ENCODE measurements at regions of chr3 and their contacts with region 1.

Region 1: GRCh38 chr3:44761424-44762169 is at the starts of genes KIAA1143 and KIF15:
- H3K4me3 Mint-ChIP-seq: peak within 1 kb of the TSS; percentile 84
- H3K27ac Mint-ChIP-seq: peak within 1 kb of the TSS; percentile 91
- H3K4me1 Mint-ChIP-seq: peaks cover 11% of the 10 kb centered on the region
- H3K27me3 Mint-ChIP-seq: no peaks in the 10 kb centered on the region

Region 2: GRCh38 chr3:44477312-44478030 is 284.1 kb before region 1 on chr3 and contains the start of gene ZNF445:
- intact Hi-C with region 1: no loop called
- H3K4me3 Mint-ChIP-seq: peak within 1 kb of the TSS; percentile 81
- H3K27ac Mint-ChIP-seq: peak within 1 kb of the TSS; percentile 66
- H3K4me1 Mint-ChIP-seq: peaks cover 11% of the 10 kb centered on the region
- H3K27me3 Mint-ChIP-seq: no peaks in the 10 kb centered on the region

Region 3: DNA sequence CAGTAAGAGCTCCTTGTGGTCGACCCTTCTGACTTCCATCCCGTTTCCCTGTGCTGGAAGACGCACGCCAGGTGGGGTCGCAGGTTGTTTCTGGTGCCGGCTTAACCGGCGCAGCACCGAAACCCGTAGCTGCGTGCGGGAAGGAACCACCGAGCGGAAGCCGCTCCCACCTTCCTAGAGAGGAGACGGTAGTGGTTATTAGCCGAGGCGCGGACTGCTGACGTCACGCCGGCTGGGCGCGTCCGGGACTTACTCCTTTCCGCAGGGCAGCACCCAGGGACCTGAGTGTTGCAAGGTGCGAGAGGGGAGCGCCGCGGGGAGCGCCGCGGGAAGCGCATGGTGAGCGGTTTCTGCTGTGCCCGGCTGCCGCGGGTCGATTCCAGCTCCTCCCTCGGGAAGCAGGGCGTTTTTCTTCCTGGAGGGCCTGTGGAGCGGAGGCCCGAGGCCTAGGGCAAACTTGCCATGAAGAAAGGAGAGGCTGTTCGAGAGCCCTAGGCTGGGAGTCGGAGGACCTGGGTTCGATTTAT is 32.1 kb before region 1 on chr3 and contains the start of gene ZNF501:
- intact Hi-C with region 1: loop called (anchors 1 kb)
- H3K4me3 Mint-ChIP-seq: peak within 1 kb of the TSS; percentile 98
- H3K27ac Mint-ChIP-seq: peak within 1 kb of the TSS; percentile 91
- H3K4me1 Mint-ChIP-seq: peaks cover 16% of the 10 kb centered on the region
- H3K27me3 Mint-ChIP-seq: no peaks in the 10 kb centered on the region

Region 4: DNA sequence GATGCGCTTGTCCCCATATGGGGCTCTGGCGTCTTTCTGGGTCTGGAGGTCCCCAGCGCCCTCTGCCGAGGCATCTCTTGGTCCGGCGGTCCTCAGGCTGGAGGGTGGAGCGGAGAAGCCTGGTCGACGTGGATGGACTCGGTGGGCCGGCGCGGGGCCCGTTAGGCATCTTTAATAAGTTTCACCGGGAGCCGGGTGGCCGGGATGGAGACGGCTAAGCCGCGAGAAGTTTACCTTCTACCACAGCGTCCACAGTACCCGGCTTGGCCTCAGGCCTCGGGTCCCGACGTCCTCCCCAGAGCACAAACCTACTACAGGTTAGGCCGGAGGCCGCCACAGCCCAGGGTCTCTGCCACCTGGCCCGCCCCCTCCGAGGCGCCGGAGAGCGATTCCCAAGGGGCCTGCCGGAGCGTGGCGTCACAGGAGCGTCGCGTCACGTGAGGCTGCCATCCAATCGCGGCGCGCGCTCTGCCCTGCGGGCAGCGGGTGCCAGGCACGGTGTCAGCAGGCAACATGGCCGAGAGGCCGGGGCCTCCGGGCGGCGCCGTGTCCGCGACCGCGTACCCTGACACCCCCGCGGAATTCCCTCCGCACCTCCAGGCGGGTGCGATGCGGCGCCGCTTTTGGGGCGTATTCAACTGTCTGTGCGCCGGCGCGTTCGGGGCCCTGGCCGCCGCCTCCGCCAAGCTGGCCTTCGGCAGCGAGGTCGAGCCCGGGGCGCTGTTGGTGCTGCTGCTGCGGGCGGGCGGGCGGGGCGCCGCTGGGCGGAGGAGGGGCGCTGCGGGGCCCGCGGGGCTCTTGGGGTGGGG is 100.0 kb after region 1 on chr3 and contains the start of gene TMEM42:
- intact Hi-C with region 1: loop called (anchors 2 kb)
- H3K4me3 Mint-ChIP-seq: peak within 1 kb of the TSS; percentile 83
- H3K27ac Mint-ChIP-seq: peak within 1 kb of the TSS; percentile 82
- H3K4me1 Mint-ChIP-seq: peaks cover 10% of the 10 kb centered on the region
- H3K27me3 Mint-ChIP-seq: no peaks in the 10 kb centered on the region

Region 5: DNA sequence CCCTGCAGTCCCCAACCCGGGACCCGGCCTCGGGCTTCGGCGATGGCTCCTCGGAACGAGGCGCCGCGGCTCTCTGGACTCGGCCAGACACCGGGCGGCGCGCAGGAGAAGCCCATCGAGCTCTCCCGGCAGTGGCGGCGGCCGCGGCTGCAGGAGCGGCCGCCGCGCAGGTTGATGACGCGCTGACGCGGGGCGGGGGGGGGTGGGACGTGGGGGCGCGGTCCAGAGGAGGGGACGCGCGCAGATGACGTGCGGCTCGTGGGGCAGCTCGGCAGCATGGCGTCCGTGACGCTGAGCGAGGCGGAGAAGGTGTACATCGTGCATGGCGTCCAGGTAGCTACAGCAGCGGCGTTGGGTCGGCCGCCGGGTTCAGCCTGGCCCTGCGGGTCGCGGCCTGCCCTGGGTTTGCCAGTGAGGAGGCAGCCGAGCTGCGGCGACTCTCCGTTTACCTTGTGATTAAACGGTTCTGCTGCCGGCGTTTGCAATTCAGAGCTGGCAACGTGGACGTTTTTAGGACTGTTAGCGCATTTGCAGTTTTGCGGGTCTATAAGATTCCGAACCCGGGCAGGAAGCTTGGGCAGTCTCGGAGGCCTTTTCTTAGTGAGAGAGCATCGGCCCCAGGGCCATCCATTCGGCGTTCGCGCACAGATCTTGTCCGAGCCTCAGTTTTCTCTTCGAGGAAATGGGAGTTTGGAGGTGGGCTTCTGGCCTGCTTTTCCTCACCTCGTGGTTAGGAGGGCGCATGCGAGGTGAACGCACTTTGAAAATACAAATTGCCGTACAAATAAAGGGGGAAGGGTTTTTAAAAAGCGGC is 214.6 kb after region 1 on chr3 and contains the starts of genes EXOSC7 and ZDHHC3:
- intact Hi-C with region 1: loop called (anchors 5 kb)
- H3K4me3 Mint-ChIP-seq: peak within 1 kb of the TSS; percentile 92
- H3K27ac Mint-ChIP-seq: peak within 1 kb of the TSS; percentile 92
- H3K4me1 Mint-ChIP-seq: peaks cover 46% of the 10 kb centered on the region
- H3K27me3 Mint-ChIP-seq: no peaks in the 10 kb centered on the region